Transverse colon (tissue), 4 donors: ENCODE measurements at regions of chr9 and their contacts with region 1.

Region 1: GRCh38 chr9:87684627-87685219 is 41.2 kb upstream of the CTSL start:
- DNase-seq: peak; percentile 72
- H3K4me3 ChIP-seq: no peak overlapping the region
- H3K27ac ChIP-seq: peak overlapping the region in 3 of 4 donors; percentile 8 to 31 (median 11)
- H3K4me1 ChIP-seq: peaks cover 0 to 17% (median 4%) of the 10 kb centered on the region in 4 donors
- H3K27me3 ChIP-seq: no peaks in the 10 kb centered on the region
- CTCF ChIP-seq: peak; percentile 75 to 79 (median 77)
- EP300 ChIP-seq: no peak
- POLR2A ChIP-seq: no peak

Region 2: GRCh38 chr9:87280421-87280820 is 404.3 kb before region 1 on chr9:
- in situ Hi-C with region 1: no loop called
- intact Hi-C with region 1: no loop called
- DNase-seq: no peak
- H3K4me3 ChIP-seq: no peak overlapping the region
- H3K27ac ChIP-seq: no peak overlapping the region
- H3K4me1 ChIP-seq: no peaks in the 10 kb centered on the region
- H3K27me3 ChIP-seq: no peaks in the 10 kb centered on the region
- CTCF ChIP-seq: no peak
- EP300 ChIP-seq: no peak
- POLR2A ChIP-seq: no peak

Region 3: DNA sequence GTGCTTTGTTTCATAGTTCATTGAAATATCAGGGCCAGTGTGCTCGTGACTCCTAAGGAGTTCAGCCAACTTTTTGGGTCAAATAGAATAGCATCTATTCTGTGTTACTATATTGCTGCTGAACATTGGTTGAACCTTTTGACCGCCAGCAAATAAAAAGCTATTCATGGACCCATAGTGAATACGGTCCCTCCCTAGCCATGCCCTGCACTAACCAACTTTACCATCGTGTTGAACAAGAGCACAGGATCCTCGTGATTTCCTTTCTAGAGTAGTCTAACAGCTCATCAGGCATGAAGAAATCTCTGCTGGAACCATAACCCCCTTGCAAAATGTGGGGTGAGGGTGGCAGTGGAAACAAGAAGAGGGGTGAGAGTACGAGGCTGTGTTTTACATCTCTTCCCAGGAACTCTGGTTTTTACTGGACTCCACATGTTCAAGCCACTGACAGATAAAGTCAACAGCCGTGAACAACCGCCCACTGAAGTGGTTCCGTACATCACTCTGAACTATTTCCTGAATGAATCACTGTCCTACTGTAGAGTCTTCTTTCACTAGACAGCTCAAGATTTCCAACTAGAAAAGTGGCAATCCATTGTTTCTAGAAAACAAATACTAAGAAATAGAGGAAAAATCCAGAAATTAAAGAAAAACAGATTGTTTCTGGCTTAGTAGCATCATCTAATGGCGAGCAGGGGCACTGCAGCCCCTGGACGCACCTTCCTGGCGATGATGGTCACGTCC is 127.8 kb after region 1 on chr9:
- in situ Hi-C with region 1: loop called in 2 of 4 experiments (anchors 5 to 10 kb)
- intact Hi-C with region 1: loop called (anchors 5 kb)
- DNase-seq: no peak
- H3K4me3 ChIP-seq: no peak overlapping the region
- H3K27ac ChIP-seq: no peak overlapping the region
- H3K4me1 ChIP-seq: peaks cover 0 to 3% (median 0%) of the 10 kb centered on the region in 4 donors
- H3K27me3 ChIP-seq: no peaks in the 10 kb centered on the region
- CTCF ChIP-seq: peak; percentile 55 to 66 (median 65)
- EP300 ChIP-seq: no peak
- POLR2A ChIP-seq: no peak

Region 4: DNA sequence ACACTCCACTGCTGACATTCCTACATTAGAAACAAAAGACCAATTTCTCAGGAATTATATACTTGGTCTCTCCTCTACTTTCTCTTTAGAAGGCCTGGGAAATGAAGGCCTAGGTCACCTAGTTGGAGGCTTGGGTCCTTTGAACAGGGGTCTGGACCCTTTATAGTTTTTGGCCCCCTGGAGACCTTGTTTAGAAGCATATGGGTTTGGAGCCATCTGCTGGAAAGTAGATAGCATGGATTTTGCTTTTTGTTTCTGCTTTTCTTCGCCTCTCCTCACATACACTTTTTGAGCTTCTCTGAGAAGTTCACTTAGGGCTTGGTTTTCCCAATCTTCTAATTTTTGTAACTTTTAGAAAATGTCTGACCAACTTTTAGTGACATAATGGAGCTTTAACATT is 356.7 kb after region 1 on chr9:
- in situ Hi-C with region 1: loop called in 3 of 4 experiments (anchors 25 kb)
- intact Hi-C with region 1: loop called (anchors 10 kb)
- DNase-seq: no peak
- H3K4me3 ChIP-seq: no peak overlapping the region
- H3K27ac ChIP-seq: no peak overlapping the region
- H3K4me1 ChIP-seq: no peaks in the 10 kb centered on the region
- H3K27me3 ChIP-seq: no peaks in the 10 kb centered on the region
- CTCF ChIP-seq: peak; percentile 25 to 55 (median 40)
- EP300 ChIP-seq: no peak
- POLR2A ChIP-seq: no peak